ENCODE measurements at regions of chr3 and their contacts with region 1.

Region 1: DNA sequence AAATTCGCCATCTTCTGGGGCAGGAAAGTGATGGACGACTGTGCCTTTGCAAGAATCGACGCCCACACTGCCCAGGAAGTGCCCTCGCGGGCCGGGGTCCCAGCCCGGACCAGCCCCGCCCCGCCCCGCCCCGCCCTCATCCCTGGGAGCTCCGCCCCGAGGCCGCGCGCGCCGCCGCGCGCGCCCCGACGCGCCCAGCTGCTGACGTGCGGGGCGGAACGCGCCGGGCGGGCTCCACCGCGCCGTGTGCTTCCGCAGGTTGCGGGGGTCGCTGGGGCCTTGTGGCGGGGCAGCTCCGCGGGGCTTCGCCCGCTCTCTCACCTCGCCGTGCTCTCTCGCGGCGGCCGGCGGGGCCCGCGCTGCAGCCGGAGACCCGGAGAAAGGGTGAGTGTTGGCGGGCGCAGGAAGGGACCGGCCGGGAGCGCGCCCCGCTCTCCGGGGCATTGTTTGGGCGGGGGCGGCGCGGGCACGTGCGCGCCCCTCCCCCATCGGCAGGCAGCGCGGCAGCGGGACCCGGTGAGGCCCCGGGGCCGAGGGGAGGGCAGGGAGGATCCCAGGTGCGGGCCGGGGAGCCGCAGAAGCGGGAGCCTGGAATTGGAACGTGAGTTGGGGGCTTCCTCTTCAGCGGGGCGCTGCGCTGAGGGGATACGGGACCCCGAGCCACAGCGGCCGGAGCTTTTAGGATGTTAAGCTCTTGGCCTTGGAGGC is at the start of gene YEATS2:
- DNase-seq: no peak
- H3K4me3 ChIP-seq: peak within 1 kb of the TSS; percentile 99 to 100 (median 100)
- H3K27ac ChIP-seq: peak within 1 kb of the TSS; percentile 97
- H3K4me1 ChIP-seq: peaks cover 15 to 48% (median 35%) of the 10 kb centered on the region in 4 donors
- H3K27me3 ChIP-seq: no peaks in the 10 kb centered on the region
- CTCF ChIP-seq: peak in 1 of 3 experiments; percentile 12
- EP300 ChIP-seq: no peak
- POLR2A ChIP-seq: no peak
- total RNA-seq, gene YEATS2: 18.2 to 34.3 (median 29.5) TPM

Region 2: GRCh38 chr3:183385698-183386613 is 311.8 kb before region 1 on chr3:
- intact Hi-C with region 1: no loop called
- DNase-seq: no peak
- H3K4me3 ChIP-seq: no peak overlapping the region
- H3K27ac ChIP-seq: peak overlapping the region in 1 of 4 donors; percentile 16
- H3K4me1 ChIP-seq: peaks cover 0 to 3% (median 0%) of the 10 kb centered on the region in 4 donors
- H3K27me3 ChIP-seq: no peaks in the 10 kb centered on the region
- CTCF ChIP-seq: peak; percentile 74 to 80 (median 77)
- EP300 ChIP-seq: no peak
- POLR2A ChIP-seq: no peak

Region 3: GRCh38 chr3:183620252-183620628 is 77.5 kb before region 1 on chr3:
- intact Hi-C with region 1: no loop called
- DNase-seq: no peak
- H3K4me3 ChIP-seq: no peak overlapping the region
- H3K27ac ChIP-seq: no peak overlapping the region
- H3K4me1 ChIP-seq: peaks cover 0 to 8% (median 0%) of the 10 kb centered on the region in 4 donors
- H3K27me3 ChIP-seq: no peaks in the 10 kb centered on the region
- CTCF ChIP-seq: no peak
- EP300 ChIP-seq: no peak
- POLR2A ChIP-seq: no peak

Region 4: GRCh38 chr3:183635431-183636220 is 62.1 kb before region 1 on chr3 and contains the start of gene KLHL24:
- intact Hi-C with region 1: loop called (anchors 2 kb)
- DNase-seq: peak; percentile 98
- H3K4me3 ChIP-seq: peak within 1 kb of the TSS; percentile 82 to 99 (median 94)
- H3K27ac ChIP-seq: peak within 1 kb of the TSS; percentile 93 to 99 (median 99)
- H3K4me1 ChIP-seq: peaks cover 30 to 44% (median 38%) of the 10 kb centered on the region in 4 donors
- H3K27me3 ChIP-seq: no peaks in the 10 kb centered on the region
- CTCF ChIP-seq: peak in 1 of 3 experiments; percentile 9
- EP300 ChIP-seq: no peak
- POLR2A ChIP-seq: peak; percentile 97
- total RNA-seq, gene KLHL24: 87.5 to 166 (median 123) TPM

Region 5: GRCh38 chr3:183664913-183665381 is 32.8 kb before region 1 on chr3:
- intact Hi-C with region 1: loop called (anchors 5 kb)
- DNase-seq: no peak
- H3K4me3 ChIP-seq: no peak overlapping the region
- H3K27ac ChIP-seq: peak overlapping the region; percentile 65 to 78 (median 68)
- H3K4me1 ChIP-seq: peaks cover 12 to 50% (median 40%) of the 10 kb centered on the region in 4 donors
- H3K27me3 ChIP-seq: no peaks in the 10 kb centered on the region
- CTCF ChIP-seq: no peak
- EP300 ChIP-seq: no peak
- POLR2A ChIP-seq: no peak

Region 6: GRCh38 chr3:184154885-184155643 is 457.3 kb after region 1 on chr3 and contains the start of gene DVL3:
- intact Hi-C with region 1: no loop called
- DNase-seq: no peak
- H3K4me3 ChIP-seq: peak within 1 kb of the TSS; percentile 70 to 98 (median 96)
- H3K27ac ChIP-seq: peak within 1 kb of the TSS; percentile 89 to 96 (median 95)
- H3K4me1 ChIP-seq: peaks cover 49 to 55% (median 54%) of the 10 kb centered on the region in 4 donors
- H3K27me3 ChIP-seq: no peaks in the 10 kb centered on the region
- CTCF ChIP-seq: no peak
- EP300 ChIP-seq: no peak
- POLR2A ChIP-seq: no peak
- total RNA-seq, gene DVL3: 64.0 to 119 (median 86.3) TPM